ENCODE measurements at regions of chr6 and their contacts with region 1.

Region 1: DNA sequence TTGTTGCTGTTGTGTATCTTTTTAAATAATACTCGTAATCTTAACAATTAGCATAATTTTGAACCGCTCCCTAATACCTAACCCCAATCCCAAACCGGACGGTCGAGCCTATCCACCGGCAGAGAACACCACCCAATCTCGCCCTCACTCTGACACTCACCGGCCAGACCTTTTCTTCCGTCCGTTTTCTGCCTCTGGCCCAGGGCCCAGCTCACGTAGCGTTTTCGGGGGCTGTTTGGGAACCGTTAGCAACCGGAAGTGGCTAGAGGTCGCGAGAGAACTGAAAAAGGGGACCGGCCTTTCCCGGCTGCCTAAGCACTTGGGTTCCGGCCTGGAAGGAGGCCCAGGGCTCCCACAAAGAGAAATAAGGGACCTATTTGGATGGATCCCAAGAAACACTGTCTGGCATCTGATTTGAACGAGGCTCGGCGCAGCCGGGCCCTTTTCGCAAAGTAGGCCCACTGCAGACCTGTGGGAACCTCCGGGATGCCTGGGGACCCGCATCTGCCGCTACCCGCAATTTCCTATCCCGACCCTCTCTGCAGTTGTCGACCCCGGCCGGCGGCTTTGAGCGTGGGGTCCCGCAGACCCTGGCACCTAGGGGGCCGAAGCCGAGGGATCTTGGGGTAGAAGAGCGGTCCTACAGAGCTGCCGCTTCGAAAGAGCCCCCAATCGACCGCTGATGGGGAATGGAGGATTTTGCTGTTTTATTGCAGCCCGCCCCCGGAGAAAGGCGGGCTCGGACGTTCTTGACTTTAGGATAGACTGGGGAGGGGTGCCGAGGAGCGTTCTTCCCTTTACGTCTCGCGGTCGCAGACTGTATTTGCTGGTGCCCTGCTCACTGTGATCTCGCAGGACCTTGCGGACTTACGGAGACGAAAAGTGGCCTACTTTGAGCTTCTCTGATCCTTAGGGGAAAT is 4.8 kb upstream of the ZKSCAN8 start:
- DNase-seq: peak; percentile 80 to 89 (median 87)
- H3K4me3 ChIP-seq: peak overlapping the region; percentile 67 to 95 (median 92)
- H3K4me3 Mint-ChIP-seq: peak overlapping the region; percentile 95 to 99
- H3K27ac ChIP-seq: peak overlapping the region; percentile 91 to 94
- H3K27ac Mint-ChIP-seq: peak overlapping the region; percentile 95 to 99 (median 98)
- H3K4me1 ChIP-seq: peaks cover 26 to 38% of the 10 kb centered on the region in 2 donors
- H3K4me1 Mint-ChIP-seq: peaks cover 54% of the 10 kb centered on the region
- H3K27me3 ChIP-seq: no peaks in the 10 kb centered on the region
- H3K27me3 Mint-ChIP-seq: peaks cover 0 to 6% (median 2%) of the 10 kb centered on the region in 3 donors
- CTCF ChIP-seq: no peak

Region 2: GRCh38 chr6:28011722-28012121 is 125.1 kb before region 1 on chr6:
- intact Hi-C with region 1: no loop called
- DNase-seq: no peak
- H3K4me3 ChIP-seq: no peak overlapping the region
- H3K4me3 Mint-ChIP-seq: no peak overlapping the region
- H3K27ac ChIP-seq: no peak overlapping the region
- H3K27ac Mint-ChIP-seq: no peak overlapping the region
- H3K4me1 ChIP-seq: no peaks in the 10 kb centered on the region
- H3K4me1 Mint-ChIP-seq: no peaks in the 10 kb centered on the region
- H3K27me3 ChIP-seq: no peaks in the 10 kb centered on the region
- H3K27me3 Mint-ChIP-seq: no peaks in the 10 kb centered on the region
- CTCF ChIP-seq: no peak

Region 3: GRCh38 chr6:28080631-28081485 is 56.0 kb before region 1 on chr6:
- intact Hi-C with region 1: loop called (anchors 2 to 5 kb)
- DNase-seq: peak; percentile 94 to 96 (median 95)
- H3K4me3 ChIP-seq: peak overlapping the region; percentile 53 to 98 (median 80)
- H3K4me3 Mint-ChIP-seq: peak overlapping the region; percentile 96 to 97
- H3K27ac ChIP-seq: peak overlapping the region; percentile 80 to 94
- H3K27ac Mint-ChIP-seq: peak overlapping the region; percentile 93 to 100 (median 99)
- H3K4me1 ChIP-seq: peaks cover 4 to 8% of the 10 kb centered on the region in 2 donors
- H3K4me1 Mint-ChIP-seq: peaks cover 13% of the 10 kb centered on the region
- H3K27me3 ChIP-seq: no peaks in the 10 kb centered on the region
- H3K27me3 Mint-ChIP-seq: peaks cover 0 to 2% (median 0%) of the 10 kb centered on the region in 3 donors
- CTCF ChIP-seq: no peak

Region 4: DNA sequence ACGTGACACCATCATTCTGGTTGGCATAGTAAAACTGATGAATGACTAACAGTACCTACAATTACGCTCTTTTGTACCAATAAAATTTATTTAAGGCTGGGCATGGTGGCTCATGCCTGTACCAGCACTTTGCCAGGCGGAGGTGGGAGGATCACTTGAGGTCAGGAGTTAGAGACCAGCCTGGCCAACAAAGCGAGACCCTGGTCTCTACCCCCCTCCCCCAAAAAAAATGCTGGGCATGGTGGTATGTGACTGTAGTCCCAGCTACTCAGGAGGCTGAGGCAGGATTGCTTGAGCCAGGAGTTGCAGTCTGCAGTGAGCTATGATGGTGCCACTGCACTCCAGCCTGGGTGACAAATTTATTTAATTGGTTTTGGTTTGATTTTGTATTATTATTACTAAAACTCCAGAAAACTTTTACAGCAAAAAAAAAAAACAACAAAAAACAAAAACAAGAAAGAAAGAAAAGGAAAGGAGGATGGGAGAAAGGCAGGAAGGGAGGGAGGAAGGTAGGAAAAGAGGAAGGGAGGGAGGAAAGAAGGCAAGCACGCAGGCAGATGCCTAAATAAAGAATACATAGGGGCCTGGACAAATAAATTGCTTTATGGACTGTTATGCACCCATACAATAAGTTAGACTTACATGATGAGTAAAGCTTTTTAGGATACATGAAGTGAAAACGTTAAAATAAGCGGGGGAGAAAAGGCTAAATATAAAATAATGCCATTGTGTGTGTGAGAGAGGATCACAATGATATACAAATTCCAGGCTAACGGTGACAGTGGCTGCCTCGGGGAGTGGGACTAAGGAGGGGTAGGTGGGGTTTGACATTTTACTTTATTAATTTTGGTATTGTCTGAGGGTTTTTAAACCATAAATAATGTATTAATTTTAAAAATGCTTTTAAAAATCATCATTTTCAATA is 87.5 kb after region 1 on chr6:
- intact Hi-C with region 1: loop called (anchors 5 to 10 kb)
- DNase-seq: no peak
- H3K4me3 ChIP-seq: peak overlapping the region; percentile 53 to 94 (median 86)
- H3K4me3 Mint-ChIP-seq: peak overlapping the region; percentile 92 to 97
- H3K27ac ChIP-seq: peak overlapping the region in 1 of 2 donors; percentile 72
- H3K27ac Mint-ChIP-seq: peak overlapping the region in 3 of 7 donors; percentile 19 to 87 (median 68)
- H3K4me1 ChIP-seq: peaks cover 13 to 20% of the 10 kb centered on the region in 2 donors
- H3K4me1 Mint-ChIP-seq: peaks cover 21% of the 10 kb centered on the region
- H3K27me3 ChIP-seq: peaks cover 26 to 27% of the 10 kb centered on the region in 2 donors
- H3K27me3 Mint-ChIP-seq: peaks cover 22 to 36% (median 29%) of the 10 kb centered on the region in 3 donors
- CTCF ChIP-seq: no peak

Region 5: DNA sequence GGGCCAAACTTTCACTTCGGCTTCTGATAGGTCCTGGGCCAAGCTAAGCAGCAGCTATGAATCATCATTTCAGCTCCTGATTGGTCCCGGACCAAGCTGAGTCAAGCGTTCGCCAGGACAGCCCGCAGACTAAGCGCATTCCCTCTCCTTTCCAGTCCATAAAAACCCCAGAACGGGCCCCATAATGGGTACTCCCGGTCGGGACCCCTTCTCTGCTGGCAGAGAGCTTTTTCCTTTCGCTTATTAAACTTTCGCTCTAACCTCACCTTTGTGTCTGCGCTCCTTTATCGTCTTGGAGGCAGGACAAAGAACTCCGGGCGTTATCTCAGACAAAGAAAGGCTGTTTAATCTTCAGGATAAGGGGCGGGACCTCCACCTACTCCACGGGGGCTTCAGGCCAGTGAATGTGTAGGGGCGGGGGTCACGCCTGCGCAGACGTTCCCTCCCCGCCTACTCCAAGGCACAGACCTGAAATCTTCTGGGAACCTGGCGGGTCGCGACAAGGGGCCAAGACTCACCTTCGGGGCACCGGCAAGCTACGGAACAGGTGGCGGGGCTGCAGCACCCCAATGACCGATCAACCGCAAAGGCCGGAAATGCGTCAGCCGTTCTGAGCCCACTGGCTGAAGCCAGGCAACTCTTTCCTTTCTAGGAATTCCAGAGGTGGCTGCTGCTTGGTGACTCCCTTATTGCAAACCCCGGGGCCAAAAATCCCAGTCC is 198.9 kb after region 1 on chr6 and contains the start of gene ZSCAN31:
- intact Hi-C with region 1: loop called in 1 of 2 experiments (anchors 5 kb)
- DNase-seq: peak; percentile 91 to 98 (median 98)
- H3K4me3 ChIP-seq: peak within 1 kb of the TSS; percentile 86 to 94 (median 89)
- H3K4me3 Mint-ChIP-seq: no peak within 1 kb of the TSS
- H3K27ac ChIP-seq: peak within 1 kb of the TSS; percentile 88 to 90
- H3K27ac Mint-ChIP-seq: peak within 1 kb of the TSS in 1 of 7 donors; percentile 57
- H3K4me1 ChIP-seq: peaks cover 15 to 16% of the 10 kb centered on the region in 2 donors
- H3K4me1 Mint-ChIP-seq: peaks cover 5% of the 10 kb centered on the region
- H3K27me3 ChIP-seq: no peaks in the 10 kb centered on the region
- H3K27me3 Mint-ChIP-seq: no peaks in the 10 kb centered on the region
- CTCF ChIP-seq: no peak
- polyA plus RNA-seq, gene ZSCAN31: 0.25 to 0.35 TPM in 2 of 3 donors, not detected in the other